ENCODE measurements at regions of chr6 and their contacts with region 1.

Region 1: GRCh38 chr6:152301764-152302568 is 335.2 kb downstream of the SYNE1 start:
- DNase-seq: peak; percentile 61 to 91
- H3K4me3 ChIP-seq: peak overlapping the region; percentile 34 to 64
- H3K27ac ChIP-seq: peak overlapping the region; percentile 65 to 68
- H3K4me1 ChIP-seq: peaks cover 0 to 15% of the 10 kb centered on the region in 2 donors
- H3K27me3 ChIP-seq: no peaks in the 10 kb centered on the region
- CTCF ChIP-seq: peak; percentile 43 to 64 (median 59)

Region 2: DNA sequence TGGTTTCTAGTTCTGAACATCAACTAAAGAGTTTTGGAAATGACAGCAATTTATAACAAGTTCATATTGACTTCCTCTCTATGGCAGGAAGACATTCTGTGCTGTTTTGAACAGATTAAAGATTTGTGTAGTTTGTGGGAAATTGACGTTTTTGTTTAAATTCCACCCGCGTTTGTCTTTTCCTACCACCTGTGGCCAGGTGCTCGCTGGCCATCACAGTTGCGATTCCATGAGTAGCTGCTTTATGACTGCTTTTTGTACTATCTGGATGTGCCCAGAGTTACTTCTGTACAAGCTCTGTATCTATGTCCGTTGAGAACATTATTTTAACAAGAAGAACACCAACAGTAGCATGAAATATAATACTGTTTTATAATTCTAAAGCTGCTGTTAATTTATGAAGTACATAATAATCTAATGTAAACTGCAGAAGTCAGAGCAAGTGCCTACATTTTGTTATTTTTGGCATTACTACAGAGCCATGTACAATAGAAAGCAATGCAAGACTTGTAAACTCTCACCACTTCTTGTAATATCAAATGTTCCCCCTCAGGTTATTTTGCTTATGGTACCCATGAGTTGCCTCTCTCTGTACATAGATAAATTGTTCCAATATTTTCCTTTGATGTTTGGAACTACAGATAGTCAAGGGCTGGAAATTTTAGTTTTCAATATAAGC is 944.1 kb before region 1 on chr6:
- intact Hi-C with region 1: no loop called
- DNase-seq: no peak
- H3K4me3 ChIP-seq: no peak overlapping the region
- H3K27ac ChIP-seq: no peak overlapping the region
- H3K4me1 ChIP-seq: no peaks in the 10 kb centered on the region
- H3K27me3 ChIP-seq: no peaks in the 10 kb centered on the region
- CTCF ChIP-seq: no peak

Region 3: DNA sequence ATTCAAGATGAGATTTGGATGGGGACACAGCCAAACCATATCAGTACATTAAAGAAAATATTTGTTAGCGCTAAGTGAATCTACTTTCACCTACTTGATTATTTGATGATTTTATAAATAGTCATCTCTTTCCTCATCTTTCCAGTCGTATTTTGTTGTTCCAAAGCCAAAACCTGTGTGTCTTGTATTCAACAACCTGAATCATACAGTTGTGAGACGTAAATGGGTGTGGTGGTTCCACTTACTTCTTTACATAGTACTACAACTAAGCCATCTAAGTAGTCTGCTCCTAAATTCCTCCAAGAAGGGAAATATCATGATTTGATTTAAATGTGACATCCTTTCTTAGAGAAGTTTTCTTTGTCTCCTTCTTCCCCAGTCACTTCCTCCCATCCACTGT is 361.7 kb before region 1 on chr6:
- intact Hi-C with region 1: no loop called
- DNase-seq: no peak
- H3K4me3 ChIP-seq: no peak overlapping the region
- H3K27ac ChIP-seq: no peak overlapping the region
- H3K4me1 ChIP-seq: no peaks in the 10 kb centered on the region
- H3K27me3 ChIP-seq: no peaks in the 10 kb centered on the region
- CTCF ChIP-seq: no peak

Region 4: DNA sequence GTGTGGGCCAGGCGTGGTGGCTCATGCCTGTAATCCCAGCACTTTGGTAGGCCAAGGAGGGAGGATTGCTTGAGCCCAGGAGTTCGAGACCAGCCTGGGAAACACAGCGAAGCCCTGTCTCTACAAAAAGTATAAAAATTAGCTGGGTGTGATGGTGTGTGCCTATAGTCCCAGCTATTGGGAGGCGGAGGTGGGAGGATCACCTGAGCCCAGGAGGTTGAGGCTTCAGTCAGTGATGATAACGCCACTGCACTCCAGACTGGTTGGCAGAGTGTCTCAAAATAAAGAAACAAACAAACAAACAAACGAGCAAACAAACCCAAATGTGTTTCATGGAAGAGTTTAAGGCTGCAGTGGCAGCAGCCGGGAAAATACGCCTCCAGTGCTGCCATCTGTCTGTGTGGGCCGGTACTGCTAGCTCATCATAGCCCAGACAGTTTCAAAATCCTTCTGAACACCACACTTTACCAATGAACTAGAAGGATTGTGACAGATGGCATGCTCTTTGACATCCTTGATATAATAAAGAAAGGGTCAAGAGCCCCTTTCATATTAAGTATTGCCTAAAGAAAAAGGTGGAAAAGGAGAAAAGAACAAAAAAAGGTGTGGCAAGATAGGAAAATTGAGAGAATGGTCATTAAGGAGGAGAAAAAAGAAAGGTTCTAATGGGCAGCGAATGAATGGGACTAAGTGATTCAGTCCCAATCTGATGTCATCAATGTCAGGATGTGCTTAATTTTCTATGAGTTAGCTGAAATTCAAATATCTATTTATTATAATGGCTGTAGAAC is 36.6 kb after region 1 on chr6:
- intact Hi-C with region 1: loop called (anchors 5 kb)
- DNase-seq: peak in 1 of 2 donors; percentile 75
- H3K4me3 ChIP-seq: no peak overlapping the region
- H3K27ac ChIP-seq: peak overlapping the region; percentile 20 to 56
- H3K4me1 ChIP-seq: no peaks in the 10 kb centered on the region
- H3K27me3 ChIP-seq: no peaks in the 10 kb centered on the region
- CTCF ChIP-seq: peak; percentile 62 to 95 (median 89)

Region 5: DNA sequence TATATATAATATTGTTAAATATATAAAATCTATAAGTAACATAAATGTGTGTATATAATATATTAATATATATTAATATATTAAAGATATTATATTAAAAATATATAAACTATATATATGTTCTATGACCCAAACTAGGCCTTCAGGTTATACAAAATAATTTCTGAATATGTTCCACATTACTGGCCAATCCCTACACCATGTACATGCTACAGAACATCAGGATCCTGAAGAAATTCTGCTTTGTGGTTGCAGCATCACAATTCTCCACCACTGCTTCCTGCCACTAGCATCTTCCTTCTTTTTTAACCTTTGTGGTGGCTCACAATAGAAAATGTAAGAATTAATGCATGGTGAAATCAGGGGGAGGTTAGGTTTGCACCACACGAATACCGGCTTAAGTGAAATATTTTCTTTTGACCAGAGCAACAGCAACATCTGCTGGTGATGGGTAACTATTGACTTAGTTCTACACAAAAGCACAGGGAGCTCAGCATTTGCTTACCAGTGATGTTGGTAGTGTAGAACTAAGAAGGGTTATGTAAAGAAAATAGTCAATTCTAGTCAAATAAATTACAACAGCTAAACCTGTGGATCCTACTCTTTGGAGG is 54.6 kb after region 1 on chr6:
- intact Hi-C with region 1: loop called (anchors 5 kb)
- DNase-seq: no peak
- H3K4me3 ChIP-seq: no peak overlapping the region
- H3K27ac ChIP-seq: no peak overlapping the region
- H3K4me1 ChIP-seq: no peaks in the 10 kb centered on the region
- H3K27me3 ChIP-seq: no peaks in the 10 kb centered on the region
- CTCF ChIP-seq: peak in 1 of 3 experiments; percentile 31

Region 6: GRCh38 chr6:152368761-152369624 is 67.0 kb after region 1 on chr6:
- intact Hi-C with region 1: no loop called
- DNase-seq: no peak
- H3K4me3 ChIP-seq: peak overlapping the region; percentile 25 to 39
- H3K27ac ChIP-seq: peak overlapping the region; percentile 64 to 65
- H3K4me1 ChIP-seq: peaks cover 10 to 15% of the 10 kb centered on the region in 2 donors
- H3K27me3 ChIP-seq: no peaks in the 10 kb centered on the region
- CTCF ChIP-seq: no peak

Region 7: DNA sequence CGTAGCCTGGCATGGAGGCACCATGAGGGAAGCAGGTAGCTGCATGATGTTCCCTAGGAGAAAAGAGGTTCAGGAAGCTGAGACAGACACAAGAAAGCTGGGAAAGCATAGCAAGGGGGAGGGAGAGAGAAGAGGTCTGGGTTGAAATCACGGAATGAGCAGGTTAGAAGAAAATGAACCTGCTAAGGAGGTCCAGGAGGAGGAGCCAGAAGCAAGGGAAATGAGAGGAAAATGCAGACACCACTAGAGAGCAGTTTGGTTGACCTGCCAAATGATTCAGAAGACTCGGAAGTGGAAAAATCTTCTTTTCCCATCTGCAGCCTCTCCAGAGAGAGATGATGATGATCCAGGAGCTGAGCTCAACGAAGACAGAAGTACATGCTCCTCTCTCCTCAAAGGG is 519.6 kb after region 1 on chr6:
- intact Hi-C with region 1: no loop called
- DNase-seq: no peak
- H3K4me3 ChIP-seq: no peak overlapping the region
- H3K27ac ChIP-seq: no peak overlapping the region
- H3K4me1 ChIP-seq: no peaks in the 10 kb centered on the region
- H3K27me3 ChIP-seq: no peaks in the 10 kb centered on the region
- CTCF ChIP-seq: no peak